Mammary epithelial cell (primary cell): ENCODE measurements at regions of chr2 and their contacts with region 1.

Region 1: DNA sequence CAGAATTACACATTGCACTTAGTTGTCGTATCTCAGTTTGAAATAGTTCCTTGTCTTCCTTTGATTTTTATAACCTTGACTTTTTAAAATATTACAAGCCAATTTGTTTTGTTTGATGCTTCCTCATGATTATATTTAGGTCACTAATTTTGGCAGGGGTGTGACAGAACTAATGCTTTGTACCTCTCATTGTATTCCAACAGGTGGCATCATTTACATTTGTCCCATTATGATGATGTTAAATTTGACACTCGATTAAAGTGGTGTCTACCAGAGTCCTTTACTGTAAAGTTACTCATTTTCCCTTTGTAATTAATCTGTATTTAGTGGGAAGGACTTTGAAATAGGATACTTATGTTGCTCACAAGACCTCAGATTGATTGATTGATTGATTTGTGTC is 21.5 kb upstream of the MFSD2B start:
- DNase-seq: peak; percentile 6
- H3K4me3 ChIP-seq: no peak overlapping the region
- H3K27ac ChIP-seq: no peak overlapping the region
- H3K4me1 ChIP-seq: no peaks in the 10 kb centered on the region
- H3K27me3 ChIP-seq: no peaks in the 10 kb centered on the region
- CTCF ChIP-seq: peak; percentile 33 to 53

Region 2: GRCh38 chr2:23595601-23596251 is 392.6 kb before region 1 on chr2:
- CTCF ChIA-PET with region 1: no interaction called
- dilution Hi-C with region 1: no loop called
- in situ Hi-C with region 1: no loop called
- intact Hi-C with region 1: no loop called
- DNase-seq: peak; percentile 19
- H3K4me3 ChIP-seq: no peak overlapping the region
- H3K27ac ChIP-seq: no peak overlapping the region
- H3K4me1 ChIP-seq: peaks cover 7% of the 10 kb centered on the region
- H3K27me3 ChIP-seq: no peaks in the 10 kb centered on the region
- CTCF ChIP-seq: no peak

Region 3: GRCh38 chr2:24058564-24059271 is 70.3 kb after region 1 on chr2:
- CTCF ChIA-PET with region 1: no interaction called
- dilution Hi-C with region 1: no loop called
- in situ Hi-C with region 1: no loop called
- intact Hi-C with region 1: loop called (anchors 1 kb)
- DNase-seq: no peak
- H3K4me3 ChIP-seq: no peak overlapping the region
- H3K27ac ChIP-seq: no peak overlapping the region
- H3K4me1 ChIP-seq: no peaks in the 10 kb centered on the region
- H3K27me3 ChIP-seq: no peaks in the 10 kb centered on the region
- CTCF ChIP-seq: no peak

Region 4: GRCh38 chr2:24164125-24164973 is 176.0 kb after region 1 on chr2:
- CTCF ChIA-PET with region 1: no interaction called
- dilution Hi-C with region 1: no loop called
- in situ Hi-C with region 1: no loop called
- intact Hi-C with region 1: loop called (anchors 1 kb)
- DNase-seq: no peak
- H3K4me3 ChIP-seq: no peak overlapping the region
- H3K27ac ChIP-seq: no peak overlapping the region
- H3K4me1 ChIP-seq: no peaks in the 10 kb centered on the region
- H3K27me3 ChIP-seq: no peaks in the 10 kb centered on the region
- CTCF ChIP-seq: peak; percentile 49 to 69

Region 5: GRCh38 chr2:24382363-24383073 is 394.1 kb after region 1 on chr2:
- CTCF ChIA-PET with region 1: no interaction called
- dilution Hi-C with region 1: no loop called
- in situ Hi-C with region 1: no loop called
- intact Hi-C with region 1: loop called (anchors 1 kb)
- DNase-seq: peak; percentile 42
- H3K4me3 ChIP-seq: no peak overlapping the region
- H3K27ac ChIP-seq: no peak overlapping the region
- H3K4me1 ChIP-seq: peaks cover 5% of the 10 kb centered on the region
- H3K27me3 ChIP-seq: no peaks in the 10 kb centered on the region
- CTCF ChIP-seq: peak; percentile 61 to 78